Activated B cell treated with CpG ODN at 0.5 μM for 24 hours (primary cell): ENCODE measurements at regions of chr1 and their contacts with region 1.

Region 1: DNA sequence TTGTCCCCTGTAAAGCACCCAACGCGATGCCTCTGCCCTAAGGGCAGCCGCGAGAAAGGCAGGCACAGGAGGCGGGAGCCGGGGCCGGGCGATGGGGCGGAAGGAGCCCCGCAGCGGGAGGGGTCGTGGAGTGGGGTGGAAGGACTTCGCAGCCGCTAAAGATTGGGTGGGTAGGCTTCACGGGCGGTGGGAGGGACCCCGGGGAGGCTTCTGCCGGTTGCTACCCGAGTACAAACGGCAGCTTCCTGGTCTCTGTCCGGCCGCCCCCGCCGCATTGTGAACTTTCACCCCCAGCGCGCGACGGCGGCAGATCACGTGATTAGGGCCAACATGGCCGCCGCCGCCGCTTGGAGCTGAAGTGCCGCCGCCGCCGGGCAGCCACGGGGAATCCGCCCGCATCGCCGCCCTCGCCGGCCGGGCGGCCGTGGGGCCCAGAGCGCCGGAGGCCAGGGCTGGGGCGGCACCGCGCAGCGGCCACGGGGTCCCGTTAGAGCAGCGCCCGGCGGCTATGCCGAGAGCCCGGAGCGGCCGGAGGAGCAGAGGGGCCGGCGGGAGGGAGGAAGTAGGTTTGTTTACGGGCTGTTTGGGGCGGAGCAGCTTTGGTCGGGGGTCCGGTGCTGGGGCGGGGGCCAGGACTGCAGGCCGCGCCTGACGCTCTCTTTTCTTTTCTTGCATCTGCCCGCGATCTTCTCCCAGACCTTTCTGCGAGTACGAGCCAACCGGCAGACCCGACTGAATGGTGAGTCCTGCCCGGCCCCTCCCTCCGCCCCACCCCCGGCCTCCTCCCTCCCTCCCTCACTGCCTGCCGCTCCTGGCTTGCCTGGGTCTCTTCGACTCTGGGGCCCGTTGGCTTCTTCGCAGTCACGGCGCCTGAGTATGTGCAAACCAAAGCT is 42.4 kb downstream of the TMEM53 start:
- DNase-seq: peak; percentile 92
- ATAC-seq: peak; percentile 76
- H3K4me3 Mint-ChIP-seq: peak overlapping the region; percentile 91
- H3K27ac Mint-ChIP-seq: peak overlapping the region; percentile 98
- H3K4me1 Mint-ChIP-seq: peaks cover 38% of the 10 kb centered on the region
- H3K27me3 Mint-ChIP-seq: no peaks in the 10 kb centered on the region
- CTCF ChIP-seq: no peak

Region 2: DNA sequence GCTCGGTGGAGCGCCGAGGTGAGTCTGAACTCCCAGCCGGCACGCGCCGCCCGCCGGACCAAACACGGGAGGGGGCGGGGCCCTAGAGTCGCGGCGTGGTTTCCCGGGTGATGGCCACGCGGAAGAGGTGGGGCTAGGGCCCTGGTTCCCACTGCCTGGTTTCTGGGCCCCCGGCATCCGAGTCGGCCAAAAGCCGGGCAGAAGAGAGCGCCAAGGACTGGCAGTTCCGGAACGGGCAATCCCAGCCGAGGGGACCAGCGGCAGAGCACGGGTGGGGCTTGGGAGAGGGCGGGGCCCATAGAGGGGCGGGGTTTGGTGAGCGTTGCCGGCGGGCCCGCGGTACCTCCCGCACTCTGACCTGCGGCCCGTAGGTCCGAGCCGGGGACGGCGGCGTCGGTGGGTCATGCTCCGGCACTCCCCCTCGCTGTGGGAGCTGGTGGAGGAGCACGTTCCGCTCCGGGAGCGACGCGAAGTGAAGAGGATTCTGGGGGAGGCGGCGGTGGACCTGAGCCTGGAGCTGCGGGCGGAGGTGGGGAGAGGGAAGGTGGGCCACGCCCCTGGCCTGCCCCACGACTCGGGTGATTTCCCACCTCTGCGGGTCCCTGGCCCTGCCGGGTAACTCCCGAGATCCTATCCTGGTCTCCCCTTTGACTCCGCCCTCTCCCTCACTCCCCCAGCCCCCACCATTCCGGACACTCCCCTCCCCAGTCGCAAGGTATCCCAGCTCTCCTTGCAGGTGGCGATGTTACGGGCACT is 640.2 kb before region 1 on chr1 and contains the start of gene CCDC24:
- CTCF ChIA-PET with region 1: no interaction called
- POLR2A ChIA-PET with region 1: no interaction called
- intact Hi-C with region 1: loop called (anchors 10 kb)
- DNase-seq: peak; percentile 82
- ATAC-seq: peak; percentile 86
- H3K4me3 Mint-ChIP-seq: peak within 1 kb of the TSS; percentile 96
- H3K27ac Mint-ChIP-seq: peak within 1 kb of the TSS; percentile 88
- H3K4me1 Mint-ChIP-seq: peaks cover 36% of the 10 kb centered on the region
- H3K27me3 Mint-ChIP-seq: no peaks in the 10 kb centered on the region
- CTCF ChIP-seq: no peak
- total RNA-seq, gene CCDC24: 8.1 and 15.1 TPM in 2 replicates

Region 3: DNA sequence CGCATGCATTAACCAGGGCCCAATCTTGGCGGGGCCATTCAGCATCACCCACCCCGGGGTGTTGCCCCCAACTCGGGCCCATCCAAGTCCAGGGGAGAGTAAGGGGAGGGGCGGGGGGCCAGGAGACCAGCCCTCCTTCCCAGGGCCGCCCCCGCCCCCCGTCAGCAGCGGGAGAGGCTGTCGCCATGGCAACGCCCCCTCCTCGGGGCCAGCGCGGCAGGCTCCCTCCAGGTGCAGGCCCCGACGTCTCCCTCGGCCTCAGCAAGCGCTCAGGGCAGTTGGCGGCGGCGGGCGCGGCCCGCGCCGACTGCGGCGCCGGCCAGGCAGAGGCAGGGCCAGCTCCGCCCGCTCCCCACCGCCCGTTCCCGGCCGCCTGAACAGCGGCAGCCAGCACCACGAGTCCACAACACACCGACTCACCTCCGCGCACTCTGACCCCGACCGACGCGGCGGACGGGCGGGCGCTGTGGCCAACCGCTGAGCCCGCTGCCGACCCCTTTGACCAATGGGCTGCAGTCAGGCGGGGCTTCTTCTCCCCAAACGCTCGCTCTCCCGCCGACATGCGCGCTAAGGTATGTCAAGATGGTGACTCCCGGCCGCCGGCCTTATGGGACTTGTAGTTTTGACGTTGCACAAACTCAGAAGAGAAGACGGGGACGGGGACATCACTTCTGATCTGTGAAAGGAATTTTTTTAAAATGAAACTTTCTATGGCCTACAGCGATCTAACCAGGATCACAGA is 276.9 kb before region 1 on chr1 and contains the start of gene ERI3:
- CTCF ChIA-PET with region 1: no interaction called
- POLR2A ChIA-PET with region 1: interaction called, 5 read pairs
- intact Hi-C with region 1: loop called (anchors 1 kb)
- DNase-seq: peak; percentile 91
- ATAC-seq: peak; percentile 99
- H3K4me3 Mint-ChIP-seq: peak within 1 kb of the TSS; percentile 90
- H3K27ac Mint-ChIP-seq: peak within 1 kb of the TSS; percentile 83
- H3K4me1 Mint-ChIP-seq: peaks cover 28% of the 10 kb centered on the region
- H3K27me3 Mint-ChIP-seq: no peaks in the 10 kb centered on the region
- CTCF ChIP-seq: no peak
- total RNA-seq, gene ERI3: 36.2 and 37.9 TPM in 2 replicates

Region 4: GRCh38 chr1:44652445-44653106 is 20.7 kb after region 1 on chr1:
- CTCF ChIA-PET with region 1: interaction called, 7 read pairs
- POLR2A ChIA-PET with region 1: interaction called, 23 read pairs
- intact Hi-C with region 1: loop called (anchors 2 kb)
- DNase-seq: peak; percentile 70
- ATAC-seq: peak; percentile 98
- H3K4me3 Mint-ChIP-seq: no peak overlapping the region
- H3K27ac Mint-ChIP-seq: peak overlapping the region; percentile 73
- H3K4me1 Mint-ChIP-seq: no peaks in the 10 kb centered on the region
- H3K27me3 Mint-ChIP-seq: no peaks in the 10 kb centered on the region
- CTCF ChIP-seq: peak; percentile 28

Region 5: GRCh38 chr1:44696789-44697345 is 65.0 kb after region 1 on chr1:
- CTCF ChIA-PET with region 1: no interaction called
- POLR2A ChIA-PET with region 1: interaction called, 20 read pairs
- intact Hi-C with region 1: no loop called
- DNase-seq: peak; percentile 30
- ATAC-seq: peak; percentile 70
- H3K4me3 Mint-ChIP-seq: peak overlapping the region; percentile 55
- H3K27ac Mint-ChIP-seq: peak overlapping the region; percentile 84
- H3K4me1 Mint-ChIP-seq: peaks cover 52% of the 10 kb centered on the region
- H3K27me3 Mint-ChIP-seq: no peaks in the 10 kb centered on the region
- CTCF ChIP-seq: no peak

Region 6: DNA sequence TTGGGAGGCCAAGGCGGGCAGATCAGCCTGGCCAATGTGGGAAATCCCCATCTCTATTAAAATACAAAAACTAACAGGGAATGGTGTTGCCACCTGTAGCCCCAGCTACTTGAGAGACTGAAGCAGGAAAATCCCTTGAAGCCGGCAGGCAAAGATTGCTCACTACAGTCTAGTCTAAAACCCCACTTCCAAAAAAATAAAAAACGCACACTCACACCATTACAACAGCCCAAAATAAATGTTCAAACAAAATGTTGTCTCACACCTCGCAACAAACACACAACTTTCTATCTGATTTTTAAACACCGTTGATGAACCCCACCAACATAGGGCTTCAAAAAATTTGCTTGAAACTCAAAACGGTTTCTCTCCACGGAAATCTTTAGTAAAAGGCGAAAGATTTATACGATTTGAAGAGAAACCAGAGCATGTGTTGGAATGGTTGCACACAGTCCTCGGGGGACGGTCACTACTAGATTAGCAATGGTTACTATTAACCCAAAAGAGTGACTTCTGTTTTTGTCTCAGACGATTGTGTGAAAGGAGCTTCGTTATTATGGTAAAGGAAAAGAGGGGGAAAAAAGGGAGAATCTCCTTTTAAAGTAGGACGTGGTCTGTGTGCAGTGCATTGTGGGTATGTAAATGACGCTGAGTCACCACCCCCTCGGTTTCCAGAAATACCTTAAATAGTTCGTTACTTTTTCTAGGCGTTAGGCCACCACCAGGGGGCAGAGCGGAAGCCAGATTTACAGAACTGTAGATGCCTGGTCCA is 99.0 kb after region 1 on chr1 and contains the start of gene RNU5D-1:
- CTCF ChIA-PET with region 1: no interaction called
- POLR2A ChIA-PET with region 1: interaction called, 21 read pairs
- intact Hi-C with region 1: no loop called
- DNase-seq: peak; percentile 84
- ATAC-seq: peak; percentile 71
- H3K4me3 Mint-ChIP-seq: peak within 1 kb of the TSS; percentile 78
- H3K27ac Mint-ChIP-seq: peak within 1 kb of the TSS; percentile 100
- H3K4me1 Mint-ChIP-seq: peaks cover 37% of the 10 kb centered on the region
- H3K27me3 Mint-ChIP-seq: no peaks in the 10 kb centered on the region
- CTCF ChIP-seq: peak; percentile 39
- total RNA-seq, gene RNU5D-1: not detected in 2 replicates

Region 7: DNA sequence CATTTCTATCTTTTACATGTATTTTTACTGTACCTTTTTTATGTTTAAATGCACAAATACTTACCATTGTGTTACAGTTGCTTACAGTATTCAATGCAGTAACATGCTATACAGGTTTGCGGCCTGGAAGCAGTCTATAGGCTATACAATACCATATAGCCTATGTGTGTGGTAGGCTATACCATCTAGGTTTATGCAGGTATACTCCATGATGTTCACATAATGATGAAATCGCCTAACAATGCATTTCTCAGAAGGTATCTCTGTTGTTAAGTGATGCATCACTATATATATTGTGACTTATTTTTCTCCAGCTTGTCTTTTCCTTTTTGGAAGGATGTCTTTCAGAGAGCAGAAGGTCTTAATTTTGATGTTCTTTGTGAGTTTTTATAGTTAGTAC is 1275.0 kb after region 1 on chr1:
- CTCF ChIA-PET with region 1: no interaction called
- POLR2A ChIA-PET with region 1: interaction called, 10 read pairs
- intact Hi-C with region 1: no loop called
- DNase-seq: no peak
- ATAC-seq: no peak
- H3K4me3 Mint-ChIP-seq: no peak overlapping the region
- H3K27ac Mint-ChIP-seq: no peak overlapping the region
- H3K4me1 Mint-ChIP-seq: no peaks in the 10 kb centered on the region
- H3K27me3 Mint-ChIP-seq: no peaks in the 10 kb centered on the region
- CTCF ChIP-seq: no peak